Activated B cell treated with CpG ODN at 0.5 μM for 24 hours (primary cell): ENCODE measurements at regions of chr3 and their contacts with region 1.

Region 1: GRCh38 chr3:4504340-4505261 is 11.5 kb downstream of the ITPR1 start:
- DNase-seq: no peak
- ATAC-seq: peak; percentile 27
- H3K4me3 Mint-ChIP-seq: peak overlapping the region; percentile 80
- H3K27ac Mint-ChIP-seq: peak overlapping the region; percentile 87
- H3K4me1 Mint-ChIP-seq: peaks cover 89% of the 10 kb centered on the region
- H3K27me3 Mint-ChIP-seq: no peaks in the 10 kb centered on the region
- CTCF ChIP-seq: no peak

Region 2: DNA sequence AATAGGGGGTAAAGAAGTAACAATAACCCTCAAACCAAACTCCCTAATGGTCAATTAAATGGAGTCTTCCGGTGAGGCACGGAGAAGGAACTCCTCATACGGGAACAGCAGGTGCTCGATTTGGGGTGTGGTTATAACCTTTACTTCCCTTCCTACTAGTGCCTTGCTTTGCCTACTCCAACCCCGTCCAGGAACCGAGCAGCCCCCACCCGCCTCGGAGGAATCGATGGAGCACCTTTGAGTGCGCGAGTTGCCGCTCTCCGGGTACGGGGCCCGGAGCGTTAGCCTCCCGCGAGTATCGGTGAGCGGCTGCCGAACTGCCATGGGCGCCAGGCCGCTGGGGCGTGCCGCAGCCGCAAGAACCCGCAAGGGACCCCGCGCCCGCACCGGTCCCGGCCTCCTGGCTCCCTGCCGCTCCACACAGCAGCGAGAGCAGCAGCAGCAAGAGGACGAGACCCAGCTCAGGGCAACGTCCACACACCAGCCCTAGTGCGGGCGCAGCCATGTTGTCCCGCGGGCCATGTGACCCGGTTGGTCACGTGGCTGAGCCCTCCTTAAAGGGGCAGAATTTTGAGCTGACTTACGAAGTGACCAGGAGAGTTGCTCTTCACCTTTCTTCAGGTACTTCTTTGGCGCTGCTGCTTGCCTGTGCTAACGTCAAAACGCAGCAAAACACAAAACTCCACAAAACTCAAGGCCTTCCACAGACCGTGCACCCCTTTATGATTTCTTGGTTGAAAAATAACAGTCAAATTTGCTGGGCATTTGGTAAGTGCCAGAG is 37.7 kb before region 1 on chr3 and contains the start of gene SUMF1:
- CTCF ChIA-PET with region 1: no interaction called
- POLR2A ChIA-PET with region 1: interaction called, 8 read pairs
- intact Hi-C with region 1: loop called (anchors 1 kb)
- DNase-seq: peak; percentile 70
- ATAC-seq: peak; percentile 94
- H3K4me3 Mint-ChIP-seq: peak within 1 kb of the TSS; percentile 93
- H3K27ac Mint-ChIP-seq: peak within 1 kb of the TSS; percentile 96
- H3K4me1 Mint-ChIP-seq: peaks cover 16% of the 10 kb centered on the region
- H3K27me3 Mint-ChIP-seq: no peaks in the 10 kb centered on the region
- CTCF ChIP-seq: no peak
- total RNA-seq, gene SUMF1: 18.4 and 20.7 TPM in 2 replicates

Region 3: DNA sequence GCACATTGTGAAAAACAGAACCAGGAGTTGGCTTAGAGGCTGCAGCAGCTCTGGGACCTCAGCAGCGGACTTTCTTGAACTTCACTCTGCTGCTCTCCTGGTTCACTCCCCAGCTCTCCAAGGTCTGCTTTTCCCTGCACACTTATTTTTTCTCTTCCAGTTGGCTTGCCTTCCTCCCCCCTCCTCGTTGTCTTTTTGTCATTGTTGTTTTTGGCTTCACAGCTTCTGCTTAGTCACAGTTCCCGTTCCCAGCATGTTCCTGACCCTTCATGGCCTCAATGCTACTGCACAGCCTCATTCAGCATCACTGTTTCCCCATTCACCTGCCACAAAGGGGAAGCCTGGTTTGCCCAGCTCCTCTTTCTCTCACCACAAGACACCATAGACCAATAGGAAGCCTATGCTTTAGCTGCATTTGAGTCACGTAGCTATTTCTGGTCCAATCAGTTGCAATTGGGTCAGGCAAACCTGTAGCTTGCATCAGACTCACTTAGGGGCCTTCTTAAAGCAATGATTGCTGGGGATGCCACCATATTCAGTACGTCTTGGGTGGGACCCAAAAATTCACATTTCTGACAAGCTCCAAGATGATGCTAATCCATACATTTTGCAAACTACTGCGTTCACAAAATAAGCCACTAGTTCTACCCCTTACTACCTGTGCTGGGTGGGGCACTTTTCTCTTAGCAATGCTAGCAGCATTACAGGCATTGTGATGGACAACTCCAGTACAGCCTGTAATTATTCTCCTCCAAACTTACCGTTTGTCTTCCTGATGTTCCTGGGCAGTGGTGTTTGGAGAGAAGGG is 29.7 kb before region 1 on chr3:
- CTCF ChIA-PET with region 1: no interaction called
- POLR2A ChIA-PET with region 1: interaction called, 12 read pairs
- intact Hi-C with region 1: no loop called
- DNase-seq: no peak
- ATAC-seq: peak; percentile 81
- H3K4me3 Mint-ChIP-seq: peak overlapping the region; percentile 29
- H3K27ac Mint-ChIP-seq: peak overlapping the region; percentile 46
- H3K4me1 Mint-ChIP-seq: peaks cover 14% of the 10 kb centered on the region
- H3K27me3 Mint-ChIP-seq: no peaks in the 10 kb centered on the region
- CTCF ChIP-seq: no peak

Region 4: DNA sequence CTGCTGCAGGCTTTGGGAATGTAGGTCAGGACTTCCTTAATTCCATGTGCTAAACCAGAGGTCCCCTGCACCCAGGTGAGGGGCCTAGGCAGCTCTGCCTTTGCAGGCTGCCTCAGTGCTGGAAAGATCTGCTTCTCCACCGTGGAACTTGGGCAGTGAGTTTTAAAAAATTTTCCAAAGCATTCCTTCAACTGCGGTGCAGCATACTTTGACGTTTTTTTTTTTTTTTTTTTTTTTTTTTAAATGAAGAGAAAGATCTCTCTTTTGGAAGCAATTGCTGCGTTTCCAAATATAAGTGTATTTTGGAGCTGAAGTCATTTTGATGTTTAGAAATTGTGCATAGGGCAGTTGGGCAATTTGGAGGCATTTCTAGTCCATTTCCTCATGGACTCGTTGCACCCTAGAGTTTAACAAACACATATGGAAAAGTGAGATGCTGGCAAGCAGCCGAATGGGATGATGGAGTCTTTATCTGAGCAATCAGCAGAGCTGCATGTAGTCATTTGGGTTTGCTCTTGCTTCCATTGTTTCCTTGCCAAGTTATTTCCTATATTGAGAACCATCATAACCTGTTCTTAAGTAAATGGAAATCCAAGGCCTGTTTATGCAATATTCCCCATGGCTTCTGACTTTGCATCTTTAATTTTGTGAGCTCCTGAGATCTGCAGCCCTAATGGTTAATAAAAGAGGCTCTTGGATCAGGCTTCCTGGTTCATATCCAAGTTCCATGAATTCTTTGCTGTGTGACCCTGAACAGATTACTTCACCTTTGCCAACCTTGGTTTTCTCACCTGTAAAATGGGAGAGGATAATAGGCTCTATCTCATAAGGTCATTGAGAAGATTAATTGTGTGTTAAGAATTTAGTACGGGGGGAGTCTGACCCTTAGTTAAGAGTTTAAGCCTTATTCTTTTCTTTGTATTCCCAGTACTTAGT is 19.8 kb after region 1 on chr3:
- CTCF ChIA-PET with region 1: interaction called, 9 read pairs
- POLR2A ChIA-PET with region 1: interaction called, 20 read pairs
- intact Hi-C with region 1: loop called (anchors 1 kb)
- DNase-seq: no peak
- ATAC-seq: no peak
- H3K4me3 Mint-ChIP-seq: no peak overlapping the region
- H3K27ac Mint-ChIP-seq: no peak overlapping the region
- H3K4me1 Mint-ChIP-seq: peaks cover 66% of the 10 kb centered on the region
- H3K27me3 Mint-ChIP-seq: no peaks in the 10 kb centered on the region
- CTCF ChIP-seq: no peak

Region 5: GRCh38 chr3:4584456-4585249 is 80.1 kb after region 1 on chr3:
- CTCF ChIA-PET with region 1: no interaction called
- POLR2A ChIA-PET with region 1: interaction called, 4 read pairs
- intact Hi-C with region 1: loop called (anchors 5 kb)
- DNase-seq: no peak
- ATAC-seq: peak; percentile 30
- H3K4me3 Mint-ChIP-seq: peak overlapping the region; percentile 85
- H3K27ac Mint-ChIP-seq: peak overlapping the region; percentile 91
- H3K4me1 Mint-ChIP-seq: peaks cover 85% of the 10 kb centered on the region
- H3K27me3 Mint-ChIP-seq: no peaks in the 10 kb centered on the region
- CTCF ChIP-seq: no peak

Region 6: DNA sequence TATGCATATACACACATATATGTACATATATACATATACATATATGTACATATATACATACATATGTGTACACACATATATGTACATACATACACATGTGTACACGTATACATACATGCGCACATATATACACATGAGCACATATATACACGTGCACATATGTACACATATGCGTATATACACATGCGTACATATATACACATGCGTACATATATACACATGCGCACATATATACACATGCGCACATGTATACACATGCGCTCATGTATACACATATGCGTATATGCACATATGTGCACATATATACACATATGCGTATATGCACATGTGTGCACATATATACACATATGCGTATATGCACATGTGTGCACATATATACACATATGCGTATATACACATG is 1035.9 kb after region 1 on chr3:
- CTCF ChIA-PET with region 1: no interaction called
- POLR2A ChIA-PET with region 1: no interaction called
- intact Hi-C with region 1: no loop called
- DNase-seq: no peak
- ATAC-seq: no peak
- H3K4me3 Mint-ChIP-seq: no peak overlapping the region
- H3K27ac Mint-ChIP-seq: no peak overlapping the region
- H3K4me1 Mint-ChIP-seq: no peaks in the 10 kb centered on the region
- H3K27me3 Mint-ChIP-seq: no peaks in the 10 kb centered on the region
- CTCF ChIP-seq: no peak